ENCODE measurements at regions of chr7 and their contacts with region 1.

Region 1: DNA sequence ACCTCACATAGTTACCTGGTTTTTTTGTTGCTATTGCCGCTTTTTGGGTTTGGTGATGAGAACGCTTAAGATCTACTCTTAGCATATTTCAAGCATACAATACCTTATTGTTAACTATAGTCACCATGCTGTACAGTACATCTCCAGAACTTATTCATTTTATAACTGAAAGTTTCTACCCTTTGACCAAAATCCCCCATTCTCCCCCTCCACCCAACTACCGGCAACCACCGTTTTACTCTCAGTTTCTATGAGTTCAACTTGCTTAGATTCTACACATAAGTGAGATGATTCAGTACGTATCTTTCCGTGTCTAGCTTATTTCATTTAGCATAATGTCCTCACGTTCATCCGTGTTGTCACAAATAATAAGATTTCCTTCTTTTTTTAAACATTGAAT is 86.7 kb upstream of the IL6 start:
- DNase-seq: no peak
- H3K4me3 Mint-ChIP-seq: no peak overlapping the region
- H3K27ac Mint-ChIP-seq: no peak overlapping the region
- H3K4me1 Mint-ChIP-seq: no peaks in the 10 kb centered on the region
- H3K27me3 Mint-ChIP-seq: no peaks in the 10 kb centered on the region
- CTCF ChIP-seq: no peak

Region 2: DNA sequence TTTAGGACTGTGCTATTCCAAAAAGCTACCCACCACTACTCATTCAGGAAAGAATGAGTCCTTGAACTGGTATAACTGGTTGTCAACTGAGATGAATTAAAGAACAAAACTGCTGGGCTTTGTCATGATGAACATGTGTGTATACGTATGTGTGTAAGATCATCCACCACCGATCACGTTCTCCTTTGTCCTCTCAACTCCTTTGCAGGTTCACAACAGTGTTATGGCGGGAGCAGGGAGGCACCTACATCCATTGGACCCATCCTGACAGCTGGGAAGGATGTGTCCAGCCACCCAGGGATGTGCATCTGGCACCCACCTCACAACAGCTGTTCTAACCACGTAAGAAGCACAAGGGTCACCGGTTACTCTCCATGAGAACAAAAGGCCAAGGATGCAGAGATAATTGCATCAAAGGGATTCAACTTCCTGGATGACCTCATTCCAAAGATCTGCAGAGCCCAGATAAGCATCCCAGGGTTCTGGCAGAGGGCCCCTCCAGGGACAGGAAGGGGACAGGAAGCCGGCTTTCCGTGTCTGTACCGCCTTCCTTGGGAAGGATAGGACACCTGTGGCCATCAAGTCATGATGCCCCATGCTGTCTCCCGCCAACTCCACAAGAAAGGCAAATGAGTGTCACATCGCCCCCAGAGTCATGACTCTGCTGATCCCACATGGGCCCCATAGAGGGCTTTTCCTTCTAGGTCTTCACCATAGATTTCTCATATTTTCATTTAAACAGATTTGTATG is 206.4 kb before region 1 on chr7:
- CTCF ChIA-PET with region 1: no interaction called
- intact Hi-C with region 1: no loop called
- DNase-seq: peak; percentile 22
- H3K4me3 Mint-ChIP-seq: peak overlapping the region; percentile 26
- H3K27ac Mint-ChIP-seq: peak overlapping the region; percentile 68
- H3K4me1 Mint-ChIP-seq: peaks cover 55% of the 10 kb centered on the region
- H3K27me3 Mint-ChIP-seq: no peaks in the 10 kb centered on the region
- CTCF ChIP-seq: peak; percentile 16

Region 3: GRCh38 chr7:22618528-22618927 is 21.7 kb before region 1 on chr7:
- CTCF ChIA-PET with region 1: no interaction called
- intact Hi-C with region 1: loop called (anchors 1 kb)
- DNase-seq: no peak
- H3K4me3 Mint-ChIP-seq: no peak overlapping the region
- H3K27ac Mint-ChIP-seq: no peak overlapping the region
- H3K4me1 Mint-ChIP-seq: no peaks in the 10 kb centered on the region
- H3K27me3 Mint-ChIP-seq: no peaks in the 10 kb centered on the region
- CTCF ChIP-seq: no peak

Measured in Calu3 (cell line).